T-cell (primary cell): ENCODE measurements at regions of chr4 and their contacts with region 1.

Region 1: DNA sequence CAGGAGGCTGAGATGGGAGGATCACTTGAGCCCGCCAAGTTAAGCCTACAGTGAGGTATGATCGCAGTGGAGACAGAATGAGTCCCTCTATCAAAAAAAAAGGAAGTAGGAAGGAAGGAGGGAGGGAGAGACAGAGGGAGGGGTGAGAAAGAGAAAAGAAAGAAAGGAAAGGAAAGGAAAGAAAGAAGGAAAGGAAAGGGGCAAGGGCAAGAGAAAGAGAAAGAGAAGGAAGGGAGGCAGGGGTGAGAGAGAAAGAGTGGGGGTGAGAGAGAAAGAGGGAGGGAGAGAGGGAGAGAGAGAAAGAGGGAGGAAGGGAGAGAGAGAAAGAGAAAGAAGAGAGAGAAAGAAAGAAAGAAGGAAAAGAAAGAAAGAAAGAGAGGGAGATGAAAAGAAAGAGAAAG is 13.2 kb downstream of the ELF2 start:
- DNase-seq: no peak
- ATAC-seq: no peak
- H3K4me3 ChIP-seq: no peak overlapping the region
- H3K4me3 Mint-ChIP-seq: no peak overlapping the region
- H3K27ac ChIP-seq: no peak overlapping the region
- H3K27ac Mint-ChIP-seq: no peak overlapping the region
- H3K4me1 ChIP-seq: no peaks in the 10 kb centered on the region
- H3K4me1 Mint-ChIP-seq: peaks cover 15 to 22% (median 16%) of the 10 kb centered on the region in 3 donors
- H3K27me3 ChIP-seq: no peaks in the 10 kb centered on the region
- H3K27me3 Mint-ChIP-seq: no peaks in the 10 kb centered on the region

Region 2: GRCh38 chr4:139191373-139191772 is 27.6 kb after region 1 on chr4:
- CTCF ChIA-PET with region 1: no interaction called
- POLR2A ChIA-PET with region 1: interaction called in 1 of 2 experiments, 11 read pairs
- DNase-seq: no peak
- ATAC-seq: no peak
- H3K4me3 ChIP-seq: no peak overlapping the region
- H3K4me3 Mint-ChIP-seq: no peak overlapping the region
- H3K27ac ChIP-seq: no peak overlapping the region
- H3K27ac Mint-ChIP-seq: no peak overlapping the region
- H3K4me1 ChIP-seq: no peaks in the 10 kb centered on the region
- H3K4me1 Mint-ChIP-seq: no peaks in the 10 kb centered on the region
- H3K27me3 ChIP-seq: peaks cover 0 to 5% of the 10 kb centered on the region in 2 experiments
- H3K27me3 Mint-ChIP-seq: no peaks in the 10 kb centered on the region

Region 3: GRCh38 chr4:139330283-139330682 is 166.5 kb after region 1 on chr4:
- CTCF ChIA-PET with region 1: no interaction called
- POLR2A ChIA-PET with region 1: interaction called in 1 of 2 experiments, 10 read pairs
- DNase-seq: no peak
- ATAC-seq: no peak
- H3K4me3 ChIP-seq: no peak overlapping the region
- H3K4me3 Mint-ChIP-seq: no peak overlapping the region
- H3K27ac ChIP-seq: no peak overlapping the region
- H3K27ac Mint-ChIP-seq: peak overlapping the region in 1 of 2 donors; percentile 30
- H3K4me1 ChIP-seq: no peaks in the 10 kb centered on the region
- H3K4me1 Mint-ChIP-seq: peaks cover 27 to 43% (median 40%) of the 10 kb centered on the region in 3 donors
- H3K27me3 ChIP-seq: no peaks in the 10 kb centered on the region
- H3K27me3 Mint-ChIP-seq: no peaks in the 10 kb centered on the region